CD14-positive monocyte (primary cell): ENCODE measurements at regions of chr10 and their contacts with region 1.

Region 1: GRCh38 chr10:6385396-6386062 is 182.8 kb downstream of the PFKFB3 start:
- DNase-seq: peak in 2 of 3 donors; percentile 69 to 70
- H3K4me3 ChIP-seq: no peak overlapping the region
- H3K4me3 Mint-ChIP-seq: no peak overlapping the region
- H3K27ac ChIP-seq: no peak overlapping the region
- H3K27ac Mint-ChIP-seq: peak overlapping the region in 4 of 7 donors; percentile 72 to 88 (median 81)
- H3K4me1 ChIP-seq: peaks cover 27 to 42% of the 10 kb centered on the region in 2 donors
- H3K4me1 Mint-ChIP-seq: peaks cover 53% of the 10 kb centered on the region
- H3K27me3 ChIP-seq: no peaks in the 10 kb centered on the region
- H3K27me3 Mint-ChIP-seq: peaks cover 0 to 3% (median 3%) of the 10 kb centered on the region in 3 donors
- CTCF ChIP-seq: no peak

Region 2: DNA sequence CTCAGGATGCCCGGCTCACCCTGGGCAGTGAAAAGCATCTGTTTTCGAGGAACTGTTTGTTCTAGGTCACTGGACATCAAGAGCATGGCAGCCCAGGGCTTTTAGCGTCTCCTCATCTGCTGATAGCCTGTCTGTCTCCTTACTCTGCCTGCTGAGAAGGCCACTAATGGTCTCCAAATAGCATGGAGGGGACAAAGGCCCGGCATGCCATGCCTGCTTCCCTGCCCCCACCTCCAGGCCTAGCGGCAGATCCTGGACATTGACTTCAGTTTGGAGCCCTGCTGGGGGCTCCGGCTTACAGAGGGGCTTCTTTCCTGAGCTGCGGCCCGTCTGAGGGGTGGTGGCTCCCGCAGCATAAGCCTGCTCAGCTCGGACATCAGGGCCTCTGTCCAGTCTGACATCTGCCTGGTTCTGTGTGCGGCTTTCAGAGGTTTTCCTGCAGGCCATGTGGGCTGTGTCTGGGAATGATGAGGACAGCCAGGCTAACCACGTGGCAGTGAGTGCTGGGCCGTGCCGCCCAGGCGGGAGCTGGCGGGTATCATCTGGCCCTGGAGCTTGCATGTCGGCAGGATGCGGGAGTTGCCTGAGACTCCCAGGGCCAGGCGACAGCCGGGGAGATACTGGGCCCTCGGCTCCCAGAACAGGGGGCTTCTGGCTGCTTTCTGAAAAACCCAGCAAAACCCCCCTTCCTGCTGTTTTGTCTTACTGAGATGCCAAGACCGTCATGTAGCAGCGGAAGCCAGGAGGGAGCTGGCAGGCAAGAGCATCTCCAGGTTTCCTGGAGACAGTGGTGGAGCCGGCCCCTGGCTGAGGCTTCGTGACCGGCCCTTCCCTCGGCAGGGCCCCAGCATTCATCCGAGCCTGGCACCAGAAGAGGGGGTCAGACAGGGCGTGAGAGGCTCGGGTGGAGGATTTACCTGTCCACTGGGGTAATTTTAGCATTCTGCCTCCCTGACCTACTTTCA is 173.6 kb before region 1 on chr10:
- intact Hi-C with region 1: no loop called
- DNase-seq: no peak
- H3K4me3 ChIP-seq: no peak overlapping the region
- H3K4me3 Mint-ChIP-seq: no peak overlapping the region
- H3K27ac ChIP-seq: no peak overlapping the region
- H3K27ac Mint-ChIP-seq: no peak overlapping the region
- H3K4me1 ChIP-seq: peaks cover 0 to 5% of the 10 kb centered on the region in 2 donors
- H3K4me1 Mint-ChIP-seq: peaks cover 17% of the 10 kb centered on the region
- H3K27me3 ChIP-seq: no peaks in the 10 kb centered on the region
- H3K27me3 Mint-ChIP-seq: peaks cover 0 to 2% (median 0%) of the 10 kb centered on the region in 3 donors
- CTCF ChIP-seq: no peak

Region 3: GRCh38 chr10:6396652-6397051 is 11.1 kb after region 1 on chr10:
- intact Hi-C with region 1: loop called in 1 of 2 experiments (anchors 1 kb)
- DNase-seq: peak; percentile 91 to 98 (median 97)
- H3K4me3 ChIP-seq: no peak overlapping the region
- H3K4me3 Mint-ChIP-seq: peak overlapping the region in 1 of 2 donors; percentile 74
- H3K27ac ChIP-seq: peak overlapping the region; percentile 85 to 91
- H3K27ac Mint-ChIP-seq: peak overlapping the region; percentile 91 to 100 (median 98)
- H3K4me1 ChIP-seq: peaks cover 68 to 72% of the 10 kb centered on the region in 2 donors
- H3K4me1 Mint-ChIP-seq: peaks cover 73% of the 10 kb centered on the region
- H3K27me3 ChIP-seq: no peaks in the 10 kb centered on the region
- H3K27me3 Mint-ChIP-seq: peaks cover 0 to 7% (median 1%) of the 10 kb centered on the region in 3 donors
- CTCF ChIP-seq: no peak

Region 4: GRCh38 chr10:6473901-6474370 is 88.4 kb after region 1 on chr10:
- intact Hi-C with region 1: no loop called
- DNase-seq: peak; percentile 59 to 78 (median 75)
- H3K4me3 ChIP-seq: peak overlapping the region; percentile 39 to 79 (median 74)
- H3K4me3 Mint-ChIP-seq: peak overlapping the region; percentile 77 to 89
- H3K27ac ChIP-seq: peak overlapping the region; percentile 87 to 94
- H3K27ac Mint-ChIP-seq: peak overlapping the region; percentile 93 to 97 (median 96)
- H3K4me1 ChIP-seq: peaks cover 20 to 30% of the 10 kb centered on the region in 2 donors
- H3K4me1 Mint-ChIP-seq: peaks cover 30% of the 10 kb centered on the region
- H3K27me3 ChIP-seq: no peaks in the 10 kb centered on the region
- H3K27me3 Mint-ChIP-seq: no peaks in the 10 kb centered on the region
- CTCF ChIP-seq: no peak